Cardiac septum (tissue), 1 donor: ENCODE measurements at regions of chr1 and their contacts with region 1.

Region 1: GRCh38 chr1:198771563-198772153 is 132.8 kb downstream of the PTPRC start:
- DNase-seq: no peak

Region 2: DNA sequence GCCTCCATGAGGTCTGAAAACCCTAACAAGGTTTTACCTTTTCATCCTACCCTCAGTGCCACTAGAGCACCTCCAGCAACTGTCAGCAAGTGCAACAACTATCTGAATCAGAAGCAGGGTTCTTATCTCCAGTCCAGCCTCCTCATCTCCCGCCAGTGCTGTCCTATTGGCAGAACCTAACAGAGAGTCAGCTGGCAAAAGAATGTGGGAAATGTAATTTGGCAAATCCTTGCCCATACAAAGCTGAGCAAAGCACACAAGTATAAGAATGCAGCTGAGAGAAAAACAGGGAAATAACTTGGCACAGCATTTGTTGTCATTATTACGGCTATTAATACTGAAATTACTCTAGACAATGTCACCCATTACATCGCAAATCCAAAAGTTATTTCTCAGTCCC is 355.4 kb before region 1 on chr1:
- intact Hi-C with region 1: no loop called
- DNase-seq: no peak

Region 3: GRCh38 chr1:198860371-198860770 is 88.7 kb after region 1 on chr1:
- intact Hi-C with region 1: loop called (anchors 10 kb)
- DNase-seq: no peak

Region 4: DNA sequence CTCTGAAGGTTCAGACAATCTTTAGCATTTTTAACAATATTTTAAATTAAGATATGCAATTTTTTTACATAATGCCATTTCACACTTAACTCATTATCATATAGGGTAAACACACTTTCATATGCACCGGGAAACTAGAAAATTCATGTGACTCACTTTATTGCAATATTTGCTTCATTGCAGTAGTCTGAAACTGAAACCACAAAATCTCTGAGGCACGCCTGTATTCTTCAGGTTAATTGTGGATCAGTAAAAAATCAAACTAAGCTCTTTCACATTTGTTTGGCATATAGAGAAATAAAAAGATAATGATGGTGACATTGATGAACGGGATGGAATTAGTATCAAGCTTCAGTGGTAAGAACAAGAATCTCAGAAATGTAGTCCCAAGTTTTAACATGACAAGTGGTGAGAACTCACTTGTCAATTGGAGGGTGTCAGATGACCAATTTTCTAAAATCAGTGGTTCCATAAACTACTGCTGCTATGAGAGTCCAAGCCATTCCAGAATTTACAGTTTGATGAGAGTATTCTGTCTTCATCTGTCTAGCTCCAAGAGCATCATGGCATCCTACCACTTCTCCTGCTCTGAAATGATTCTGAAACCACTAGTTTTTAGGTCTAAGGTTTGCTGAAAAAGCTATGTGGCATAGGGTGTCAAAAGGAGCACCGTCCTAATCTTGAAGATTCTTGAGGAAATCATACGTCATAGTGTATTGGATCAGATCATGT is 148.2 kb after region 1 on chr1:
- intact Hi-C with region 1: loop called (anchors 10 kb)
- DNase-seq: no peak

Region 5: DNA sequence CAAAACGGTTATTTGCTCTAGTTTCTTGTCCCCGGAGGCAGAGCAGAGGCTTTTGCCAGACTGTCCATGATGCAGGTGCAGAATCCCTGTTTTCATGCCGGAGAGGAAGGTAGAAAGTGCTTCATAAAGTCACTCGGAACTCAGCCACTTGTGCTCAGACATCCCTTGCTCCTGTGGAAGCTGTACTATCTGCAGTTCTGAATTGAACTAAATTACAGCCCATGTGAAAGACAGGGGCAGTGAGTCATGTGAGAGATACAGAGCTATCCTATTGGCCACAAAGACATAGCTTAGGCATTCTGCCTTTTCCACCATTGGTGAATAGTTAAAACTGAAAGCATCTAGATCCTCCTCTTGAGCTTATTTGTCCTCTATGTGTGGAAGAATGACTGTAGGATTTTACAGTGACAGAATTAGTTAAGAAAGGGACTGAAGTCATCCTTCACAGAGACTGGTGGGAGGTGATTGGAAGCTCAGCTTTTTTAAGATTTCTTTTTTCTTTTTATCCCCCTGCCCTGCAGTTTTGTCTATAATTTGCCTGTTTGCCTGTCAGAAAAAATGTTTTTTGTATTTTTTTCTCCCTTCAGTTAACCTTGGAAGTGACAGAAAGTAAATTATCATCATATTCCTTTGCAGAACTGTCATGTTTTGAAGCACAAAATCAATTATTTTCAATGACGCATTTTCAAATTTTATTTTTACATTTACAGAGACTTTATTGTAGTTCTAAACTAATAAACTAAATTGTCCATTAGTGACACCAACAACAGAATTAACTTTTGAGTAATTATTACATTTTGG is 165.8 kb after region 1 on chr1:
- intact Hi-C with region 1: no loop called
- DNase-seq: peak; percentile 76

Region 6: DNA sequence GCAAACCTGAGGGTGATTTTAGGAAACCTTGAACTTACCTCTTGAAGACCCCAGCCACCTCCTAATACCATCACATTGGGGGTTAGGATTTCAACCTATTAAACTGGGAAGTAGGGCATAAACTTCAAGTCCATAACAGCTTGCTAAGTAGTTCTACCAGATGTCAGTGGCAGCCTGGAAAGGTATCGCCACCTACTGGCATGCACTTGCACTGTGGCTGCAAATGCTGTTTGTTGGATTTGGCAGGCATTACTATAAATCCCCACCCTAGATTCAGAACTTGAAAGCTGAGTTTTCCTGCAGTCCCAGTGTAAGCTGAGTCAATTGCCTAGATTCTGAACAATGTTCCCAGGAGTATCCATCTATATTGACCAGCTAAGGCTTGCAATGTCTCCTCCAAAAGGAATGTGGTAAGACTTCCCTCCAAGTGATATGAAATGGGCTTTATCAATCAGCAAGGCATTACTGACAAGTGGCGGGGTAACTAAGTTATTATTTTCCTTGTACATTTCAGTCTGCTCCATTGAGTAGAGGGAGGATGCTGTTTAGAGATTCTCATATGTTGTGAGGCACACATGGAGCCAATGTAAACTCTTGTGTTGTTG is 341.7 kb after region 1 on chr1:
- intact Hi-C with region 1: loop called (anchors 10 kb)
- DNase-seq: peak; percentile 80